ENCODE measurements at regions of chr3 and their contacts with region 1.

Region 1: GRCh38 chr3:46705022-46705530 is 3.9 kb downstream of the TMIE start:
- DNase-seq: peak; percentile 65 to 83
- ATAC-seq: peak; percentile 73 to 97 (median 92)
- H3K4me3 ChIP-seq: no peak overlapping the region
- H3K4me3 Mint-ChIP-seq: no peak overlapping the region
- H3K27ac ChIP-seq: no peak overlapping the region
- H3K27ac Mint-ChIP-seq: no peak overlapping the region
- H3K4me1 ChIP-seq: peaks cover 2% of the 10 kb centered on the region
- H3K4me1 Mint-ChIP-seq: peaks cover 0 to 8% of the 10 kb centered on the region in 2 donors
- H3K27me3 ChIP-seq: peaks cover 7% of the 10 kb centered on the region
- H3K27me3 Mint-ChIP-seq: peaks cover 8 to 16% of the 10 kb centered on the region in 2 donors
- CTCF ChIP-seq: peak; percentile 97

Region 2: DNA sequence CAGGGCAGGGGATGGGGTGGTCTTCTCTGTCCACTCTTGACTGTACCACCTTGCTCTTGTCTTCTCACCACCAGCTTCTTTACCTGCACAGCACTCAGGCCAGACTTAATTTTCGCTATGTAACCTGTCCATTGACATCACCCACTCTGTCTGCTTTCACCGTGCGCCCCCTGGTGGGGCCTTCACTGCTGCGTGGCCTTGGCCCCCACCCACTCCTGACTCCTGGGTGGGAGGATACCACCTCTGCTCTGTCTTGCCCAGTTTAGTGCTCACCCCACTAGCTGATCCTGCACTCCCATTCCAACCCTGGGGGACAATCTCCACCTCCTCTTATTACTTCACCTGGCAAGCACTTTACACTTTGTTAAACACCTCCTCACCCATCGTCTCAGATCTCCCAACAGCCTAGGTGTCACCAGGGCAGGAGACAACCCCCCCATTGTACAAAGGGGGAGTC is 190.2 kb after region 1 on chr3:
- intact Hi-C with region 1: loop called (anchors 1 kb)
- DNase-seq: peak; percentile 75 to 86
- ATAC-seq: peak; percentile 63 to 81 (median 78)
- H3K4me3 ChIP-seq: no peak overlapping the region
- H3K4me3 Mint-ChIP-seq: no peak overlapping the region
- H3K27ac ChIP-seq: no peak overlapping the region
- H3K27ac Mint-ChIP-seq: no peak overlapping the region
- H3K4me1 ChIP-seq: peaks cover 22% of the 10 kb centered on the region
- H3K4me1 Mint-ChIP-seq: peaks cover 0 to 38% of the 10 kb centered on the region in 2 donors
- H3K27me3 ChIP-seq: peaks cover 22% of the 10 kb centered on the region
- H3K27me3 Mint-ChIP-seq: peaks cover 26% of the 10 kb centered on the region in 2 donors
- CTCF ChIP-seq: peak; percentile 79

Region 3: DNA sequence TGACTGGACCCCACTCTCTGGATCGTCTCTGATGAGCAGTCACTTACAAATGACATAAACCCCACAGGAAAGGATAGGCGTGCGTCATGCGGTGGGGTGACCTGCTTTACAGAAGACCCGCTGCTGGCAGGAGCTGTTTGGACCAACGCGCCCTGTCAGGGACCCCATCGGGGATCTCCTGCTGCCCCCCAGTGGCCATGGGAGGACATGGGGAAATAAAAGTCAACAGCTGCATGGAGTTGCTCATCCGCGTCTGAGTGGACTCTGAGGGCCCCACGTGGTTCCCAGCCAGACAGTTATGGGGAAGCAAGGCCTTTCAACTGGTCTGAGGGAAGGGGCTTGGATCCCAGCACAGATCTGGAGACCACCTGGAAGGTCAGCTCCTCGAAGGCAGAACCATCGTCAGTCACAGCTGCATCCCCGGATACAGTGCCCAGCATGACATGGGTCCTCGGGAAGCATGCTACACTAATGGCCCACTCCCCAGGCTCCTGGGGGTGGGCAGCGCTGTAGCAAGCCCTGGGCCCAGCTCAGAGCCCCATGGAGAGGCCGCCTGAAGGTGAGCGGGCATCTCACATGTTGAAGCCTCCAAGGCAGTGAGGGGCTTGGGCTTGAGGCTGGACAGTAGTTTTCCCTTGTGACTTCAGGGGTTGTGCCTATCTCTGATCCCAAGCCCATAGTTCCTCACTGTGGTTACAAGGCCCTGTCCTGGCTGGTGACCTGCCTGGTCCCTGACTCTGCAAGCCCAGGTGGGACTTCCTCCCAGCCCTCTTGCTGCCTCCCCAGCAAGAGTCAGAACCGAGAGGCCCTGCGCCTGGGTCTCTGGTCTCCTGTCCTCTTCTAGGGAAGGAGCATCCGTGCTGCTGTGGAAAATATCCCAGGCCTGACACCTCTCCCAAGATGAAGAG is 204.7 kb after region 1 on chr3:
- intact Hi-C with region 1: loop called (anchors 1 kb)
- DNase-seq: peak; percentile 81 to 84
- ATAC-seq: peak; percentile 87 to 96 (median 92)
- H3K4me3 ChIP-seq: no peak overlapping the region
- H3K4me3 Mint-ChIP-seq: no peak overlapping the region
- H3K27ac ChIP-seq: no peak overlapping the region
- H3K27ac Mint-ChIP-seq: peak overlapping the region in 1 of 2 donors; percentile 52
- H3K4me1 ChIP-seq: peaks cover 21% of the 10 kb centered on the region
- H3K4me1 Mint-ChIP-seq: peaks cover 16 to 17% of the 10 kb centered on the region in 2 donors
- H3K27me3 ChIP-seq: no peaks in the 10 kb centered on the region
- H3K27me3 Mint-ChIP-seq: no peaks in the 10 kb centered on the region
- CTCF ChIP-seq: peak; percentile 95

Region 4: GRCh38 chr3:47324278-47324865 is 619.3 kb after region 1 on chr3:
- intact Hi-C with region 1: loop called (anchors 2 kb)
- DNase-seq: peak; percentile 22 to 76
- ATAC-seq: peak; percentile 53 to 72 (median 56)
- H3K4me3 ChIP-seq: no peak overlapping the region
- H3K4me3 Mint-ChIP-seq: no peak overlapping the region
- H3K27ac ChIP-seq: no peak overlapping the region
- H3K27ac Mint-ChIP-seq: peak overlapping the region in 1 of 2 donors; percentile 75
- H3K4me1 ChIP-seq: no peaks in the 10 kb centered on the region
- H3K4me1 Mint-ChIP-seq: peaks cover 6 to 8% of the 10 kb centered on the region in 2 donors
- H3K27me3 ChIP-seq: no peaks in the 10 kb centered on the region
- H3K27me3 Mint-ChIP-seq: no peaks in the 10 kb centered on the region
- CTCF ChIP-seq: peak; percentile 74

Region 5: DNA sequence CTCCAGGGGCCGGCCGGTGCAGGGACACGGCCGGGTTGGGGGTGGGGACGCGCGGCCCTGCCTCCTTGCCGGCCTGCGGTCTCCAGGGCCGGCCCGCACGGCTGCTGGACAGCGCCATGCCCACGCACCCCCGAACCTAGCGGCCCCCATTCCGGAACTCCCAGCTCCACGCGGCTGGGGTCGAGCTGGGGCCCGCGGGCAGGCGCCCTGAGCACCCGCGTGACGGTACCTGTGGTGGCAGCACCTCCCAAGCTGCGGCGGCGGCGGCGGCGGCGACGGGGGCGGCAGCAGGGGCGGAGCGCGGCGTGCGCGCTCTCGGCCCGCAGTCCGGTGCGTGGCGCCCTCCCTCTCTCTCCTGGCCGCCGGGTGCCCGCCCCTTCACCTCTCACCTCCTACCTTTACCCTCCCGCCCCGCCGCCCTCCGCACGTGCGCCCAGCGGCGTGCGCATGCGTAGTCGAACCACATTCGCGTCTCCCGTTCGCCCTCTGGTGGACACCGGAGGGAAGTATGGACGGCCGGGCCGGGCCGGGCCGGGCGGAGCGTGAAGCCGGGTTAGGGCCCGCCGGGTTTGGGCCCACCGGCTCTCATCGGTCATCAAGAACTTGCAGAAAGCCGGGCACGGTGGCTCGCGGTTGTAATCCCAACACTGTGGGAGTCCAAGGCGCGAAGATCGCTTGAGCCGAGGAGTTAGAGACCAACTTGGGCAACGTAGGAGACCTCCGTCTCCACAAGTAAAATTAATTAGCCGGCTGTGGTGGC is 770.7 kb after region 1 on chr3 and contains the start of gene SCAP:
- intact Hi-C with region 1: loop called (anchors 1 kb)
- DNase-seq: peak; percentile 95 to 98
- ATAC-seq: peak; percentile 92 to 96 (median 93)
- H3K4me3 ChIP-seq: peak within 1 kb of the TSS; percentile 83
- H3K4me3 Mint-ChIP-seq: peak within 1 kb of the TSS; percentile 94
- H3K27ac ChIP-seq: peak within 1 kb of the TSS; percentile 86
- H3K27ac Mint-ChIP-seq: peak within 1 kb of the TSS; percentile 90 to 95
- H3K4me1 ChIP-seq: peaks cover 24% of the 10 kb centered on the region
- H3K4me1 Mint-ChIP-seq: peaks cover 23 to 30% of the 10 kb centered on the region in 2 donors
- H3K27me3 ChIP-seq: no peaks in the 10 kb centered on the region
- H3K27me3 Mint-ChIP-seq: no peaks in the 10 kb centered on the region
- CTCF ChIP-seq: peak; percentile 95
- total RNA-seq, gene SCAP: 63.9 to 104 (median 82.7) TPM

Measured in natural killer cell (primary cell).